ENCODE measurements at regions of chr1 and their contacts with region 1.

Region 1: DNA sequence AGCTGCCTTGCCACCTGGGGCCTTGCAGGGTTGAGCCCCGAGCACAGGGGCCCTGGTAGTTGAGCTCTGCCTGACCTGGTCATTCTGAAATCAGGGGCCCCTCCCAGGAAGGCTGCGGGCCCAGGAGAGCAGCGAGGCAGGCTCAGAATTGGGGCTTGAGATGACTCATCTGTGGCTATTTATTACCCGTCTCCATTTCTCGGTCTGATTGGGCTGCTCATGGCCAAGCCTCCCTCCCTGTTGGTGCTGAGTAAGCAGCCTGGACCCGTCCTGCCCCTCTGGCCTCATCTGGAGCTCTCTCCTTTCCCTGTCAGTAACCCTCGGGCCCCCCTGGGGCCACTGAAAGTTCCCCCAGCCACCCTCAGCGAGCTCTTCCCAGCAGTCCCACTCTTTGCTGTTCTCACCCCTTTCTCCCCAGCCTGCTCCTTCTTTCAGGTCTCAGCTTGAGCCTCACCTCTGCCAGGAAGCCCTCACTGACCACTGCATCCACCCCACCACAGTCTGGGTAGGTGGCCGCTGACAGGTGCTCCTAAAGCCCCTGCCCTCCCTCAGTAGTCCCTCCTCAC is 11.0 kb upstream of the TNFRSF8 start:
- DNase-seq: peak; percentile 96
- ATAC-seq: peak; percentile 79
- H3K4me3 ChIP-seq: peak overlapping the region; percentile 45; the same call in 1 of the 2 replicates
- H3K27ac ChIP-seq: peak overlapping the region; percentile 100
- H3K4me1 ChIP-seq: peaks cover 93% of the 10 kb centered on the region
- H3K27me3 ChIP-seq: no peaks in the 10 kb centered on the region
- CTCF ChIP-seq: no peak
- EP300 ChIP-seq: peak; percentile 79 to 95
- POLR2A ChIP-seq: peak; percentile 56; the same call in 1 of the 2 replicates
- RAD21 ChIP-seq: peak; percentile 19

Region 2: GRCh38 chr1:12019858-12020509 is 32.1 kb before region 1 on chr1:
- CTCF ChIA-PET with region 1: interaction called, 5 read pairs
- POLR2A ChIA-PET with region 1: interaction called, 33 read pairs
- RAD21 ChIA-PET with region 1: interaction called, 24 read pairs
- SMC1A ChIA-PET with region 1: interaction called, 7 read pairs
- in situ Hi-C with region 1: no loop called
- intact Hi-C with region 1: no loop called
- DNase-seq: no peak
- ATAC-seq: peak; percentile 17
- H3K4me3 ChIP-seq: peak overlapping the region; percentile 88
- H3K27ac ChIP-seq: peak overlapping the region; percentile 86
- H3K4me1 ChIP-seq: peaks cover 4% of the 10 kb centered on the region; the same call in 1 of the 2 replicates
- H3K27me3 ChIP-seq: no peaks in the 10 kb centered on the region
- CTCF ChIP-seq: no peak
- EP300 ChIP-seq: no peak
- POLR2A ChIP-seq: no peak
- RAD21 ChIP-seq: no peak

Region 3: GRCh38 chr1:12067900-12068821 is 16.1 kb after region 1 on chr1:
- CTCF ChIA-PET with region 1: interaction called, 21 read pairs
- POLR2A ChIA-PET with region 1: interaction called, 154 read pairs
- RAD21 ChIA-PET with region 1: interaction called, 167 read pairs
- SMC1A ChIA-PET with region 1: interaction called, 209 read pairs
- in situ Hi-C with region 1: no loop called
- intact Hi-C with region 1: loop called (anchors 1 kb)
- DNase-seq: peak; percentile 91
- ATAC-seq: peak; percentile 56
- H3K4me3 ChIP-seq: peak overlapping the region; percentile 86
- H3K27ac ChIP-seq: peak overlapping the region; percentile 91
- H3K4me1 ChIP-seq: peaks cover 39% of the 10 kb centered on the region
- H3K27me3 ChIP-seq: no peaks in the 10 kb centered on the region
- CTCF ChIP-seq: no peak
- EP300 ChIP-seq: peak; percentile 45 to 83; a peak in 3 of 4 replicates
- POLR2A ChIP-seq: peak; percentile 67
- RAD21 ChIP-seq: no peak

Region 4: GRCh38 chr1:12143631-12144155 is 91.6 kb after region 1 on chr1:
- CTCF ChIA-PET with region 1: no interaction called
- POLR2A ChIA-PET with region 1: no interaction called
- RAD21 ChIA-PET with region 1: interaction called, 4 read pairs
- SMC1A ChIA-PET with region 1: interaction called, 10 read pairs
- in situ Hi-C with region 1: no loop called
- intact Hi-C with region 1: no loop called
- DNase-seq: no peak
- ATAC-seq: peak; percentile 27
- H3K4me3 ChIP-seq: no peak overlapping the region
- H3K27ac ChIP-seq: peak overlapping the region; percentile 60
- H3K4me1 ChIP-seq: peaks cover 52% of the 10 kb centered on the region
- H3K27me3 ChIP-seq: no peaks in the 10 kb centered on the region
- CTCF ChIP-seq: peak in 1 of 3 experiments; percentile 21; a peak in 2 of 6 replicates
- EP300 ChIP-seq: no peak
- POLR2A ChIP-seq: peak; percentile 52; the same call in 1 of the 2 replicates
- RAD21 ChIP-seq: no peak

Region 5: GRCh38 chr1:12244078-12244477 is 192.0 kb after region 1 on chr1:
- CTCF ChIA-PET with region 1: no interaction called
- POLR2A ChIA-PET with region 1: no interaction called
- RAD21 ChIA-PET with region 1: no interaction called
- SMC1A ChIA-PET with region 1: no interaction called
- in situ Hi-C with region 1: no loop called
- intact Hi-C with region 1: no loop called
- DNase-seq: no peak
- ATAC-seq: no peak
- H3K4me3 ChIP-seq: no peak overlapping the region
- H3K27ac ChIP-seq: no peak overlapping the region
- H3K4me1 ChIP-seq: no peaks in the 10 kb centered on the region
- H3K27me3 ChIP-seq: no peaks in the 10 kb centered on the region
- CTCF ChIP-seq: peak; percentile 25 to 41 (median 35); a peak in 5 of 6 replicates
- EP300 ChIP-seq: no peak
- POLR2A ChIP-seq: no peak
- RAD21 ChIP-seq: peak; percentile 31; the same call in 1 of the 2 replicates

Region 6: DNA sequence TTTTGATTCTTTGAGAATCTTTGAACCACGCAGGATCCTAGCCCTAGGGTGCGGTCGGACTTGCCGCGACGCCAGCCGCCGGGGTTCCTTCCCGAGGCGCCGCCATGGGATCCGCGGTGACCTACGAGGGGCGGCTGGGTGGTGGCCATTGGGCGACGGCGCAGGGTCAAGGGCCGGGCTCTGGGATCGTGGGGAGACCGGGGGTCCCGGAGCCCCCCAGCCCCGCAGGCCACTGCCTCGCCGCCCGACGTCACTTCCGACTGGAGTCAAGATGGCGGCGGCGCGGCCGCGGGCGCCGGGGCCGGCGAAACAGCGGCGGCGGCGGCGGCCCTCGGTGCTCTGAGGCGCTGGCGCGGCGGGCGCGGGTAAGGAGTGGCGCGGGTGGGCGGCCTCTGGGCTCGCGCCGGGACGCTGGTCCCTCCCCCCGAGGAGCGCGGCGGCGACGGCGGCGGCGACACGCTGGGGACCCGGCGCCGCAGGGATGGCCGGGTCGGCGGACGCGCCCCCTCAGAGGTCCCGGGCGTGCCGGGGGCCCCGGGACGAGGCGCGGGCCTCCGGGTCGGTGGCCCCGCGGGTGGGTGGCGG is 1647.9 kb after region 1 on chr1 and contains the start of gene PRDM2:
- CTCF ChIA-PET with region 1: no interaction called
- POLR2A ChIA-PET with region 1: no interaction called
- RAD21 ChIA-PET with region 1: no interaction called
- SMC1A ChIA-PET with region 1: no interaction called
- in situ Hi-C with region 1: loop called (anchors 25 kb)
- intact Hi-C with region 1: no loop called
- DNase-seq: no peak
- ATAC-seq: peak; percentile 28
- H3K4me3 ChIP-seq: peak within 1 kb of the TSS; percentile 89
- H3K27ac ChIP-seq: peak within 1 kb of the TSS; percentile 96
- H3K4me1 ChIP-seq: peaks cover 22% of the 10 kb centered on the region
- H3K27me3 ChIP-seq: no peaks in the 10 kb centered on the region
- CTCF ChIP-seq: no peak
- EP300 ChIP-seq: no peak
- POLR2A ChIP-seq: peak; percentile 58
- RAD21 ChIP-seq: no peak
- polyA plus RNA-seq, gene PRDM2: 8.4 to 8.6 TPM